Activated T-helper 2 cell treated with anti-CD3 and anti-CD28 coated beads, Interferon-gamma antibody, Interleukin-2, Interleukin-4, amounts not matched to agents 10 μg/mL and 5 μg/mL and 100 μg/mL, durations not matched to agents 14 hours and 24 hours and 36 hours (primary cell): ENCODE measurements at regions of chr3 and their contacts with region 1.

Region 1: GRCh38 chr3:169241991-169242707 is 421.4 kb downstream of the MECOM start:
- DNase-seq: no peak
- H3K4me3 Mint-ChIP-seq: no peak overlapping the region
- H3K27ac Mint-ChIP-seq: no peak overlapping the region
- H3K4me1 Mint-ChIP-seq: no peaks in the 10 kb centered on the region
- H3K27me3 Mint-ChIP-seq: peaks cover 41% of the 10 kb centered on the region

Region 2: GRCh38 chr3:169227911-169228310 is 14.2 kb before region 1 on chr3:
- intact Hi-C with region 1: loop called (anchors 1 kb)
- DNase-seq: peak; percentile 20
- H3K4me3 Mint-ChIP-seq: no peak overlapping the region
- H3K27ac Mint-ChIP-seq: no peak overlapping the region
- H3K4me1 Mint-ChIP-seq: peaks cover 7% of the 10 kb centered on the region
- H3K27me3 Mint-ChIP-seq: peaks cover 45% of the 10 kb centered on the region

Region 3: GRCh38 chr3:169448501-169448900 is 206.4 kb after region 1 on chr3:
- intact Hi-C with region 1: no loop called
- DNase-seq: no peak
- H3K4me3 Mint-ChIP-seq: no peak overlapping the region
- H3K27ac Mint-ChIP-seq: no peak overlapping the region
- H3K4me1 Mint-ChIP-seq: no peaks in the 10 kb centered on the region
- H3K27me3 Mint-ChIP-seq: no peaks in the 10 kb centered on the region

Region 4: DNA sequence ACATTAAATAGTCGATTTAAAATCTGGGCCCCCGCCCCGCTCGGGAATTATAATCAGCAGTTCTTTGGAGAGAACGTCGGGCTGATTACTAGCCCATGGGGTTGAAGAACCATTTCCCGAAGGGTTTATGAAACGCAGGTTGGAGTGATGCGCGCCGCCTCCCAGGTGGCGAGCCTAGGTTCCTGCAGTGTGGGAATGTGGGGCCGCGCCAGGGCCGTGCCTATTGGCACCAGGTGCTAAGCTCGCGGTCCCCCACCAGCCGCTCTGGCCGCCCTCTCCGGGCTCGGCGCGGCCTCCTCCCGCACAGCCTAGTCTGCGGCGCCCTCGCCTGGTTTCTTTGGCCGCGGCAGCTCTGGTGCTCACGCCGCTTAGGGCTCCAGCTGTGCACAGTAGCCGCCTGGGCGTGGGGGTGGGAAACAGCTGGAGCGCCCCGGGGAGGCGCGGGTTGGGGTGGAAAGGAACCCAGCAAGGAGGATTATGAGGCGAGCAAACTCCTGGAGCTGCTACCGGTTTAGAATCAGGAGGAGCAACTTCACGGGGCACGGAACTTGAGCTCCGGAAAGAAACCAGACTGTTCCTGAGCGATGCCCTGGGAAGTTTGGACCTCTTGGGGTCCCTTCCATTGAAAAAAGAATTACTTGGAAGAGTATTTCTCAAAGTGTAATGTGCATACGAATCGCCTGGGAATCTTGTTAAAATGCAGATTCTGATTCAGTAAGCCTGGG is 427.0 kb after region 1 on chr3:
- intact Hi-C with region 1: loop called (anchors 5 kb)
- DNase-seq: no peak
- H3K4me3 Mint-ChIP-seq: peak overlapping the region; percentile 14
- H3K27ac Mint-ChIP-seq: no peak overlapping the region
- H3K4me1 Mint-ChIP-seq: peaks cover 17% of the 10 kb centered on the region
- H3K27me3 Mint-ChIP-seq: peaks cover 84% of the 10 kb centered on the region